ENCODE measurements at regions of chr3 and their contacts with region 1.

Region 1: DNA sequence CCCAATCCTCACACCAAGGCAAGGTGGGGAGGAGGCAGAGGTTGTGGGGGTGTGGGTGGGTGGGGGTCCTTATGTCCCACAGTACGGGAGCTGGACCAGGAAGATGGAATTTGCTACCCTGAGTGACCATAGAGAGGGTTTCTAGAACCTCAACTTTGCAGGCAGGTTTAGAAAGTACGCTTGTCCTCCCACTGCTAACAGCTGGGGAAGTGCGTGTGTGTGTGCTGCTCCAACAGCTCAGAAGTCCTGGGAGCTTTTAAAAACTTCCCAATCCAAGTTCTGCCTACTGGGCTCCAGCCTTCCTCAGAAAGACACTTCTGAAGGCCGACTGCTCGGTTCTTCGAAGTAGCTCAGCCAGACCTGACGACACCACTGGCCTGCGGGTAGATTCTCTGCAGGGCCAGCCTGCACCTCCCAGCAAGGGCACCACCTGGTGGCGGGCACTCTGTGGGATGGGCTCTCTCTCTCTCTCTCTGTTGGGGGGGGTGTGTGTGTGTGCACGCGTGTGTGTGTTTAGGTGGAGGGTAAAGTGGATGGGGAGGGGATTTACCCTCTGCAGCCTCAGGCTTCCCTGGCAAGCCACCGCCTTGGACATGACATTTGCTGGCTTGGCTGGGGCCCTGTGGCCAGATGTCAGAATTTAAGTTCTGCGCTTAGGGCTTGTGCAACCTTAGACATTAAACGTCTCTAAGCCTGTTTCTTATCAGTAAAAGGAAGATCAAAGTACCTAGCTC is 15.6 kb downstream of the TMEM158 start:
- DNase-seq: peak; percentile 79
- H3K4me3 Mint-ChIP-seq: no peak overlapping the region
- H3K27ac Mint-ChIP-seq: no peak overlapping the region
- H3K4me1 Mint-ChIP-seq: peaks cover 14% of the 10 kb centered on the region
- H3K27me3 Mint-ChIP-seq: no peaks in the 10 kb centered on the region
- CTCF ChIP-seq: peak; percentile 91

Region 2: DNA sequence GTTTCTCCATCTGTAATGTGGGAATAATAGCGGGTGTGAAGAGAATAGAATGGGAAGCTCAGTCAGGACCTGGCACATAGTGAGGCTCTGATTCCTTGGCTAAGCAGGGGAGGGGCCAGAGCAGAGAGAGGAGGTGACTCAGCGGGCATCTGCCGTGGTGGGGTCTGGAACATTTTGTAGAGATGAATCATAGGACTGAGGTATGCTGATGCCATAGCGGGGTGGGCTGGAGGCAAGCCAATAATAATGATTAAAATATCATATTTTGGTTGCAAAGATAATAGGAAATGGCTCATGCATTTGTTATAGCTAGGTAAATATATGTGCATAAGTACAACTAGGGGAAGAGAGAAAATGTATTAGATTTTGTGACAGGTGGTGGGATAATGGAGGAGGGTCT is 324.9 kb before region 1 on chr3:
- CTCF ChIA-PET with region 1: no interaction called
- POLR2A ChIA-PET with region 1: no interaction called
- intact Hi-C with region 1: no loop called
- DNase-seq: peak; percentile 98
- H3K4me3 Mint-ChIP-seq: peak overlapping the region; percentile 30
- H3K27ac Mint-ChIP-seq: peak overlapping the region; percentile 79
- H3K4me1 Mint-ChIP-seq: peaks cover 47% of the 10 kb centered on the region
- H3K27me3 Mint-ChIP-seq: no peaks in the 10 kb centered on the region
- CTCF ChIP-seq: no peak

Region 3: GRCh38 chr3:45055411-45056143 is 154.9 kb before region 1 on chr3:
- CTCF ChIA-PET with region 1: interaction called, 26 read pairs
- POLR2A ChIA-PET with region 1: interaction called, 4 read pairs
- intact Hi-C with region 1: no loop called
- DNase-seq: peak; percentile 51
- H3K4me3 Mint-ChIP-seq: no peak overlapping the region
- H3K27ac Mint-ChIP-seq: peak overlapping the region; percentile 43
- H3K4me1 Mint-ChIP-seq: peaks cover 49% of the 10 kb centered on the region
- H3K27me3 Mint-ChIP-seq: no peaks in the 10 kb centered on the region
- CTCF ChIP-seq: peak; percentile 11

Region 4: DNA sequence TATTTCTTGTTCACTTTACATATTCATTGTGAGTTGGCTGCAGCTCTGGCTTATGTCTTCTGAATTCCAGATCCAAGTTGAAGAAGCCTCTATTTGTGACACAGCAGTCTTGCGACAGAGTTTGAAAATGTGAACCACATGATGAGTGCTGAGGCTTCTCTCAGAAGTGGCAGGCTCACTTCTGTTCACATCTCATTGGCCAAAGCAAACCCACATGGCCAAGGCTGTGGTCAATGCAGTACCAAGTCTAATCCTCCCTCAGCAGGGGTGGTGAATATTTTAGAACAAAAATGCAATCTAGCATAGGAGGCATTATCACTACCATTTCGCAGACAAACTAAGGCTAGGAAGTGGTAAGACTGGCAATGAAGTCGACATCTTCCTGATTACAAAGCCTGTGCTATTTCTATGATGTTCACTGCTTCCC is 109.5 kb before region 1 on chr3:
- CTCF ChIA-PET with region 1: interaction called, 11 read pairs
- POLR2A ChIA-PET with region 1: no interaction called
- intact Hi-C with region 1: no loop called
- DNase-seq: no peak
- H3K4me3 Mint-ChIP-seq: no peak overlapping the region
- H3K27ac Mint-ChIP-seq: no peak overlapping the region
- H3K4me1 Mint-ChIP-seq: peaks cover 13% of the 10 kb centered on the region
- H3K27me3 Mint-ChIP-seq: no peaks in the 10 kb centered on the region
- CTCF ChIP-seq: no peak

Region 5: GRCh38 chr3:45145681-45146614 is 64.5 kb before region 1 on chr3 and contains the start of gene CDCP1:
- CTCF ChIA-PET with region 1: interaction called, 38 read pairs
- POLR2A ChIA-PET with region 1: interaction called, 14 read pairs
- intact Hi-C with region 1: loop called (anchors 5 kb)
- DNase-seq: peak; percentile 70
- H3K4me3 Mint-ChIP-seq: peak within 1 kb of the TSS; percentile 88
- H3K27ac Mint-ChIP-seq: peak within 1 kb of the TSS; percentile 91
- H3K4me1 Mint-ChIP-seq: peaks cover 22% of the 10 kb centered on the region
- H3K27me3 Mint-ChIP-seq: no peaks in the 10 kb centered on the region
- CTCF ChIP-seq: no peak
- total RNA-seq, gene CDCP1: 180 and 208 TPM in 2 replicates

Region 6: GRCh38 chr3:45182915-45183867 is 27.3 kb before region 1 on chr3:
- CTCF ChIA-PET with region 1: interaction called, 21 read pairs
- POLR2A ChIA-PET with region 1: interaction called, 5 read pairs
- intact Hi-C with region 1: loop called (anchors 1 kb)
- DNase-seq: peak; percentile 94
- H3K4me3 Mint-ChIP-seq: no peak overlapping the region
- H3K27ac Mint-ChIP-seq: peak overlapping the region; percentile 93
- H3K4me1 Mint-ChIP-seq: peaks cover 36% of the 10 kb centered on the region
- H3K27me3 Mint-ChIP-seq: no peaks in the 10 kb centered on the region
- CTCF ChIP-seq: no peak

Region 7: GRCh38 chr3:45321607-45322391 is 111.3 kb after region 1 on chr3:
- CTCF ChIA-PET with region 1: no interaction called
- POLR2A ChIA-PET with region 1: no interaction called
- intact Hi-C with region 1: no loop called
- DNase-seq: no peak
- H3K4me3 Mint-ChIP-seq: no peak overlapping the region
- H3K27ac Mint-ChIP-seq: no peak overlapping the region
- H3K4me1 Mint-ChIP-seq: no peaks in the 10 kb centered on the region
- H3K27me3 Mint-ChIP-seq: peaks cover 44% of the 10 kb centered on the region
- CTCF ChIP-seq: no peak

Region 8: GRCh38 chr3:45499529-45499928 is 289.1 kb after region 1 on chr3:
- CTCF ChIA-PET with region 1: interaction called, 17 read pairs
- POLR2A ChIA-PET with region 1: no interaction called
- intact Hi-C with region 1: no loop called
- DNase-seq: peak; percentile 53
- H3K4me3 Mint-ChIP-seq: no peak overlapping the region
- H3K27ac Mint-ChIP-seq: no peak overlapping the region
- H3K4me1 Mint-ChIP-seq: no peaks in the 10 kb centered on the region
- H3K27me3 Mint-ChIP-seq: no peaks in the 10 kb centered on the region
- CTCF ChIP-seq: peak; percentile 46